ENCODE measurements at regions of chr3 and their contacts with region 1.

Region 1: GRCh38 chr3:172341482-172342059 is 106.7 kb downstream of the GHSR start:
- DNase-seq: peak in 9 of 35 experiments; percentile 1 to 74 (median 8)
- ATAC-seq: peak; percentile 41 to 71 (median 62)
- H3K4me3 ChIP-seq: no peak overlapping the region
- H3K4me3 Mint-ChIP-seq: no peak overlapping the region
- H3K27ac ChIP-seq: no peak overlapping the region
- H3K27ac Mint-ChIP-seq: no peak overlapping the region
- H3K4me1 ChIP-seq: no peaks in the 10 kb centered on the region
- H3K4me1 Mint-ChIP-seq: no peaks in the 10 kb centered on the region
- H3K27me3 ChIP-seq: no peaks in the 10 kb centered on the region
- H3K27me3 Mint-ChIP-seq: no peaks in the 10 kb centered on the region

Region 2: GRCh38 chr3:171646357-171647133 is 695.0 kb before region 1 on chr3:
- CTCF ChIA-PET with region 1: interaction called, 8 to 11 read pairs
- POLR2A ChIA-PET with region 1: no interaction called
- DNase-seq: peak in 1 of 35 experiments; percentile 36
- ATAC-seq: no peak
- H3K4me3 ChIP-seq: no peak overlapping the region
- H3K4me3 Mint-ChIP-seq: no peak overlapping the region
- H3K27ac ChIP-seq: no peak overlapping the region
- H3K27ac Mint-ChIP-seq: peak overlapping the region in 1 of 2 donors; percentile 19
- H3K4me1 ChIP-seq: no peaks in the 10 kb centered on the region
- H3K4me1 Mint-ChIP-seq: no peaks in the 10 kb centered on the region
- H3K27me3 ChIP-seq: no peaks in the 10 kb centered on the region
- H3K27me3 Mint-ChIP-seq: peaks cover 0 to 3% of the 10 kb centered on the region in 2 donors

Region 3: GRCh38 chr3:172029425-172030098 is 312.0 kb before region 1 on chr3:
- CTCF ChIA-PET with region 1: interaction called, 7 to 13 read pairs
- POLR2A ChIA-PET with region 1: interaction called in 1 of 2 experiments, 5 read pairs
- DNase-seq: no peak
- ATAC-seq: no peak
- H3K4me3 ChIP-seq: no peak overlapping the region
- H3K4me3 Mint-ChIP-seq: no peak overlapping the region
- H3K27ac ChIP-seq: no peak overlapping the region
- H3K27ac Mint-ChIP-seq: no peak overlapping the region
- H3K4me1 ChIP-seq: no peaks in the 10 kb centered on the region
- H3K4me1 Mint-ChIP-seq: no peaks in the 10 kb centered on the region
- H3K27me3 ChIP-seq: peaks cover 0 to 3% of the 10 kb centered on the region in 2 experiments
- H3K27me3 Mint-ChIP-seq: peaks cover 2 to 4% of the 10 kb centered on the region in 2 donors

Region 4: GRCh38 chr3:172354931-172355499 is 13.4 kb after region 1 on chr3:
- CTCF ChIA-PET with region 1: interaction called, 5 to 12 read pairs
- POLR2A ChIA-PET with region 1: interaction called in 1 of 2 experiments, 3 read pairs
- DNase-seq: no peak
- ATAC-seq: no peak
- H3K4me3 ChIP-seq: no peak overlapping the region
- H3K4me3 Mint-ChIP-seq: no peak overlapping the region
- H3K27ac ChIP-seq: no peak overlapping the region
- H3K27ac Mint-ChIP-seq: no peak overlapping the region
- H3K4me1 ChIP-seq: no peaks in the 10 kb centered on the region
- H3K4me1 Mint-ChIP-seq: no peaks in the 10 kb centered on the region
- H3K27me3 ChIP-seq: no peaks in the 10 kb centered on the region
- H3K27me3 Mint-ChIP-seq: no peaks in the 10 kb centered on the region

Region 5: DNA sequence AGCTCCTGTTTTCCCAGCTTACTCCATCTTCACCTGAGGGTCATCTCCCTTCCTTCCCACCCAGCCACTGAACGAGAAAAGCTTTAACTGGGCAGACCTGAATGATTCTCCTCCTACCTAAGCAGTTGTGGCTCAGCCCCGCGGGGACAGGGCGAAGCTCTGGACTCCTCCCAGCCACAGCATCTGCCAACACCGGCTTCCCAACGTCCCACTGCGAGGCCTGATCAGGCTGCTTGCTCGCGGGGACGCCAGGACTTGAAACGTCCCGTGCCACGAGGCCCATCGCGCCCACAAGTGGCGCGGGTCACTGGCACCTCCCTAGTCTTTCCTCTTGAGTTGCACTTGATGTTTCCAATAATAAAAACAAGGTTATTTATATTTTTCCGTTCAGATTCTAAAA is 799.4 kb after region 1 on chr3 and contains the start of gene SPATA16:
- CTCF ChIA-PET with region 1: no interaction called
- POLR2A ChIA-PET with region 1: no interaction called
- DNase-seq: no peak
- ATAC-seq: no peak
- H3K4me3 ChIP-seq: no peak within 1 kb of the TSS
- H3K4me3 Mint-ChIP-seq: no peak within 1 kb of the TSS
- H3K27ac ChIP-seq: no peak within 1 kb of the TSS
- H3K27ac Mint-ChIP-seq: no peak within 1 kb of the TSS
- H3K4me1 ChIP-seq: no peaks in the 10 kb centered on the region
- H3K4me1 Mint-ChIP-seq: no peaks in the 10 kb centered on the region
- H3K27me3 ChIP-seq: no peaks in the 10 kb centered on the region
- H3K27me3 Mint-ChIP-seq: no peaks in the 10 kb centered on the region
- total RNA-seq, gene SPATA16: not detected

Measured in T-cell (primary cell).